GM10248 (cell line): ENCODE measurements at regions of chr6 and their contacts with region 1.

Region 1: GRCh38 chr6:99151634-99152344 is 197.7 kb downstream of the FAXC start:
- DNase-seq: peak; percentile 50
- CTCF ChIP-seq: peak; percentile 89

Region 2: GRCh38 chr6:98747960-98748359 is 403.8 kb before region 1 on chr6:
- CTCF ChIA-PET with region 1: no interaction called
- POLR2A ChIA-PET with region 1: no interaction called
- DNase-seq: no peak
- CTCF ChIP-seq: no peak

Region 3: DNA sequence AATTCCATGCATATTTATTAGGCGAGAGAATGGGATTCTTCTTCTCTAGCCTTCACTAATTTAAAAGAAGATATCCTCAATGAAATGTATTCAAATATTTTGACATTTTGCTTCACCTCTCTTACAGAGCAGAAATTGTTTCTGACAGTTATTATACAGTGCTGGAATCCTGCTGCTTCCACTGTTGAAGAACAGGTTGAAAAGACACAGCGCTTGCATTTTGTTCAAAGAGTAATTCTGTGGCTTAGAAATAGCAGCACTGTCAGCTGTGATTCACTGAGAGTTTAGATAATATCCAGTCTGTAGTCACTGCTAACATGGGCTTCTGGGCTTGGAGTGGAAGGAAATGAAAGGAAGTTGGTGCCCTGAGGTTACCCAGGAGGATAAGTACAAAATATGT is 87.0 kb before region 1 on chr6:
- CTCF ChIA-PET with region 1: no interaction called
- POLR2A ChIA-PET with region 1: no interaction called
- DNase-seq: no peak
- CTCF ChIP-seq: no peak

Region 4: GRCh38 chr6:99119109-99120031 is 32.4 kb before region 1 on chr6:
- CTCF ChIA-PET with region 1: interaction called, 10 read pairs
- POLR2A ChIA-PET with region 1: no interaction called
- DNase-seq: peak; percentile 35
- CTCF ChIP-seq: peak; percentile 60

Region 5: DNA sequence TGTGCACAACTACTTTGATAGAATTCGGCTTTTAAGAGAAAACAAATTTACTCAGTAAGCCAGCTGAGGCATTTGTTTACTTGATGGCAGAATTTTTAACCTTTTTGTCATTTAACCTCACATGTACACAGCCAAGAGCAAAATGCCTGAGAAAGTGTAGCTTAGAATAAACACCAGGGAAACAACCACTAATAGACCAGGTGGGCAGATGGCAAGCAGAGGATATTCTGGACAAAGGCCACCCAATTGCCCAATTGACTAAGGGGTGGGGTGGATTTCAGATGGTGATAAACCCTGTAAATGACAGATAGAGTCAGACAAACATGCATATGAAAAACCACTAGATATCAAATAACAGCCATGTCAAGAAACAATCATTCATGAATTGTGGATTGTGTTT is 13.3 kb before region 1 on chr6:
- CTCF ChIA-PET with region 1: interaction called, 15 read pairs
- POLR2A ChIA-PET with region 1: no interaction called
- DNase-seq: no peak
- CTCF ChIP-seq: no peak

Region 6: GRCh38 chr6:99165838-99166237 is 14.0 kb after region 1 on chr6:
- CTCF ChIA-PET with region 1: interaction called, 15 read pairs
- POLR2A ChIA-PET with region 1: no interaction called
- DNase-seq: no peak
- CTCF ChIP-seq: no peak

Region 7: DNA sequence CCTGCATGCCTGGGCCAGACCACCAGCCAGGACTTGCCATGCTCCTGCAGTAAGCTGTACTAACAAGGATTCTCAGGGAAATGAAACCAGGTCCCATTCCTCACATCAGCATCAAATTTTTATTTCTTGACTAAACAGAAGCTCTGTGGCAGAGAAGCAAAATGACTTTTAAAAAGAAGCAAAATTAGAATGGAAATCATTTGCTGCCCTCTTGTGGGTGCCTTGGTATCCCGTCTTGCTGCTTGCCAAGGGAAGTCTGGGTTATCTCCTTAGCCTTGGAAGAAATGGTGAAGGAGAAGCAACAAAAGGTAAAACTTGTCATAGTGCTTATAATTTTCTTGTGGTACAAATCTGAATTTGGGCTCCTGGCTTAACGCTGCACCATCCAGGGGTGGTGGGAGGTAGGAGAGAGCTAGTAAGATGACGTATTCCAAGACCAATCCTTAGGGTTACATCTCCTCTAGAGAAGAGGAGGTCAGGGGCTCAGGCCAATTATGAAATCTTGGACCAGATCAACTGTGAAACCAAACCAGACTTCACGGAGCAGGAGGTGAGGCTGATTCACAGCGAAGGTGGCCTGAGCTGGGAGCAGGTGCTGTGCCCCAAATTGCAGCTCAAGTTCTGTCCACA is 90.2 kb after region 1 on chr6:
- CTCF ChIA-PET with region 1: interaction called, 145 read pairs
- POLR2A ChIA-PET with region 1: no interaction called
- DNase-seq: peak; percentile 22
- CTCF ChIP-seq: peak; percentile 53

Region 8: DNA sequence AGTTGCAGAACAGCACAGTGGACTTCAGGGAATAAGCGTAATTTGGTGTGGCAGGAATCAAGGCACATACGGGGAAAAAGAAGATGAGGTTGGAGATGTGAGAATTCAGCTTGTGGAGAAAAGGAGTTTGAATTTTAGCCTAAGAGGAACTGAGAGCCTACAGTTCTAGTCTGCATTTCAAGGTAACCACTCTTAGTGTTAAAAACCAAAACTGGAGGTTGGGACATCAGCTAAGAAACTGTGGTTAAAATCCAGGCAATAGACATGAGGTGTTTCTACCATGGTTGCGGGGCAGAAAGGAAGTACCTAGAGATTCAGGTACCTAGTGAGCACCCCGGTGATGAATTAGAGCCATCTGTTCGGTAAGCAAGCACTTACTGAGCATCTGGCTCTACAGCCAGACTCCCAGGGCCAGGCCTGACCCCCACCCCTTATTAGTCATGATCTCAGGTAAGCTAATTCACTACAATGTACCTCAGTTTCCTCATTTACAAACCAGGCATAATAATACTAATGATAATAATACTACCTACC is 153.3 kb after region 1 on chr6:
- CTCF ChIA-PET with region 1: no interaction called
- POLR2A ChIA-PET with region 1: no interaction called
- DNase-seq: peak; percentile 16
- CTCF ChIP-seq: no peak